Mammary epithelial cell (primary cell): ENCODE measurements at regions of chr10 and their contacts with region 1.

Region 1: GRCh38 chr10:102641880-102642735 is 2.2 kb upstream of the TRIM8 start:
- DNase-seq: peak; percentile 93
- H3K4me3 ChIP-seq: peak overlapping the region; percentile 64 to 93 (median 86)
- H3K27ac ChIP-seq: peak overlapping the region; percentile 71
- H3K4me1 ChIP-seq: peaks cover 8% of the 10 kb centered on the region
- H3K27me3 ChIP-seq: no peaks in the 10 kb centered on the region
- CTCF ChIP-seq: no peak

Region 2: GRCh38 chr10:102596506-102596971 is 45.6 kb before region 1 on chr10:
- CTCF ChIA-PET with region 1: interaction called, 8 read pairs
- dilution Hi-C with region 1: no loop called
- in situ Hi-C with region 1: no loop called
- intact Hi-C with region 1: loop called (anchors 1 kb)
- DNase-seq: peak; percentile 57
- H3K4me3 ChIP-seq: no peak overlapping the region
- H3K27ac ChIP-seq: no peak overlapping the region
- H3K4me1 ChIP-seq: peaks cover 11% of the 10 kb centered on the region
- H3K27me3 ChIP-seq: no peaks in the 10 kb centered on the region
- CTCF ChIP-seq: peak; percentile 90

Region 3: GRCh38 chr10:102604379-102604960 is 37.6 kb before region 1 on chr10:
- CTCF ChIA-PET with region 1: interaction called, 8 read pairs
- dilution Hi-C with region 1: no loop called
- in situ Hi-C with region 1: no loop called
- intact Hi-C with region 1: loop called (anchors 2 kb)
- DNase-seq: peak; percentile 79
- H3K4me3 ChIP-seq: no peak overlapping the region
- H3K27ac ChIP-seq: peak overlapping the region; percentile 48
- H3K4me1 ChIP-seq: peaks cover 26% of the 10 kb centered on the region
- H3K27me3 ChIP-seq: no peaks in the 10 kb centered on the region
- CTCF ChIP-seq: no peak

Region 4: GRCh38 chr10:102678842-102679289 is 36.8 kb after region 1 on chr10:
- CTCF ChIA-PET with region 1: interaction called, 3 read pairs
- dilution Hi-C with region 1: no loop called
- in situ Hi-C with region 1: no loop called
- intact Hi-C with region 1: loop called (anchors 2 kb)
- DNase-seq: peak; percentile 48
- H3K4me3 ChIP-seq: no peak overlapping the region
- H3K27ac ChIP-seq: no peak overlapping the region
- H3K4me1 ChIP-seq: peaks cover 30% of the 10 kb centered on the region
- H3K27me3 ChIP-seq: no peaks in the 10 kb centered on the region
- CTCF ChIP-seq: peak; percentile 45 to 79

Region 5: GRCh38 chr10:102713814-102714620 is 71.9 kb after region 1 on chr10 and contains the start of gene ARL3:
- CTCF ChIA-PET with region 1: no interaction called
- dilution Hi-C with region 1: no loop called
- in situ Hi-C with region 1: no loop called
- intact Hi-C with region 1: loop called (anchors 1 kb)
- DNase-seq: peak; percentile 99
- H3K4me3 ChIP-seq: peak within 1 kb of the TSS; percentile 84 to 95 (median 89)
- H3K27ac ChIP-seq: peak within 1 kb of the TSS; percentile 82
- H3K4me1 ChIP-seq: peaks cover 15% of the 10 kb centered on the region
- H3K27me3 ChIP-seq: no peaks in the 10 kb centered on the region
- CTCF ChIP-seq: peak; percentile 48 to 57
- total RNA-seq, gene ARL3: 2.3 to 8.7 TPM